MCF 10A (cell line): ENCODE measurements at regions of chr21 and their contacts with region 1.

Region 1: GRCh38 chr21:33641336-33642026 is at the start of gene CRYZL1:
- DNase-seq: peak; percentile 100
- H3K4me3 Mint-ChIP-seq: peak within 1 kb of the TSS; percentile 71
- H3K27ac Mint-ChIP-seq: peak within 1 kb of the TSS; percentile 82
- H3K4me1 Mint-ChIP-seq: peaks cover 24% of the 10 kb centered on the region
- H3K27me3 Mint-ChIP-seq: no peaks in the 10 kb centered on the region
- CTCF ChIP-seq: no peak
- total RNA-seq, gene CRYZL1: 35.2 and 40.0 TPM in 2 replicates

Region 2: GRCh38 chr21:33655591-33656221 is 14.2 kb after region 1 on chr21:
- CTCF ChIA-PET with region 1: interaction called, 3 read pairs
- POLR2A ChIA-PET with region 1: interaction called, 26 read pairs
- intact Hi-C with region 1: no loop called
- DNase-seq: peak; percentile 81
- H3K4me3 Mint-ChIP-seq: peak overlapping the region; percentile 24
- H3K27ac Mint-ChIP-seq: peak overlapping the region; percentile 82
- H3K4me1 Mint-ChIP-seq: peaks cover 28% of the 10 kb centered on the region
- H3K27me3 Mint-ChIP-seq: no peaks in the 10 kb centered on the region
- CTCF ChIP-seq: no peak

Region 3: DNA sequence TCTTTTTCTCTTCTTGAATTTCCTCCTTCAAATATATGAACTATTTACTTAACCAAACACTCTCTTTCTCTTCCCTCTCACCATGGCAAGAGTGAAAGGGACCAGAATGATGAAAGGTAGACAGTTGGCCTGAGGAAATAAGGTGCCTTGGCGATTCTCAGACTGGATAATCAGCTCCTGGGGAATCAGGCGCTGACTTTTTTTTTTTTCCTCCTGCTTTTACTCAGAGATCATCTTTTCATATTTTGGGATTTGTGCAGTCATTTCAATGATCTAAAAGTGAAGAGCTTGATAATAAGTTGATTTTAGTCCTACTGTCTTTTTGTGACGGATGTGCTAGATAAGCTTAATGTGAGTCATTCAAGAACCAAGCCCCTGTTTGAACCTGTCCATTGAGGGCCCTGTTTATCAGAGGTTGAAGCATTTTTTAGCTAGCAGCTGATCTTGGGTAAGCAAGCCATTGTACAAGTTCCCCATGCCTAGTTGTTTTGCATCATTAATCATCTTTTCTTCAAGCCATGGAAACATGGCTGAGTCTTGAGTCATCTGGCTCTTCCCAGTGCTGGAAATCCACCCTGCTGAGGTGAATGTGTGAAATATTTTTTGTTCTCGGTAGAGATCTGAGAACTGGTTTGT is 41.6 kb after region 1 on chr21:
- CTCF ChIA-PET with region 1: interaction called, 3 read pairs
- POLR2A ChIA-PET with region 1: interaction called, 42 read pairs
- intact Hi-C with region 1: loop called (anchors 2 kb)
- DNase-seq: peak; percentile 90
- H3K4me3 Mint-ChIP-seq: peak overlapping the region; percentile 55
- H3K27ac Mint-ChIP-seq: peak overlapping the region; percentile 92
- H3K4me1 Mint-ChIP-seq: peaks cover 39% of the 10 kb centered on the region
- H3K27me3 Mint-ChIP-seq: no peaks in the 10 kb centered on the region
- CTCF ChIP-seq: no peak

Region 4: GRCh38 chr21:33761441-33762036 is 120.1 kb after region 1 on chr21:
- CTCF ChIA-PET with region 1: no interaction called
- POLR2A ChIA-PET with region 1: interaction called, 3 read pairs
- intact Hi-C with region 1: loop called (anchors 5 kb)
- DNase-seq: peak; percentile 76
- H3K4me3 Mint-ChIP-seq: peak overlapping the region; percentile 3
- H3K27ac Mint-ChIP-seq: peak overlapping the region; percentile 87
- H3K4me1 Mint-ChIP-seq: peaks cover 16% of the 10 kb centered on the region
- H3K27me3 Mint-ChIP-seq: no peaks in the 10 kb centered on the region
- CTCF ChIP-seq: no peak

Region 5: DNA sequence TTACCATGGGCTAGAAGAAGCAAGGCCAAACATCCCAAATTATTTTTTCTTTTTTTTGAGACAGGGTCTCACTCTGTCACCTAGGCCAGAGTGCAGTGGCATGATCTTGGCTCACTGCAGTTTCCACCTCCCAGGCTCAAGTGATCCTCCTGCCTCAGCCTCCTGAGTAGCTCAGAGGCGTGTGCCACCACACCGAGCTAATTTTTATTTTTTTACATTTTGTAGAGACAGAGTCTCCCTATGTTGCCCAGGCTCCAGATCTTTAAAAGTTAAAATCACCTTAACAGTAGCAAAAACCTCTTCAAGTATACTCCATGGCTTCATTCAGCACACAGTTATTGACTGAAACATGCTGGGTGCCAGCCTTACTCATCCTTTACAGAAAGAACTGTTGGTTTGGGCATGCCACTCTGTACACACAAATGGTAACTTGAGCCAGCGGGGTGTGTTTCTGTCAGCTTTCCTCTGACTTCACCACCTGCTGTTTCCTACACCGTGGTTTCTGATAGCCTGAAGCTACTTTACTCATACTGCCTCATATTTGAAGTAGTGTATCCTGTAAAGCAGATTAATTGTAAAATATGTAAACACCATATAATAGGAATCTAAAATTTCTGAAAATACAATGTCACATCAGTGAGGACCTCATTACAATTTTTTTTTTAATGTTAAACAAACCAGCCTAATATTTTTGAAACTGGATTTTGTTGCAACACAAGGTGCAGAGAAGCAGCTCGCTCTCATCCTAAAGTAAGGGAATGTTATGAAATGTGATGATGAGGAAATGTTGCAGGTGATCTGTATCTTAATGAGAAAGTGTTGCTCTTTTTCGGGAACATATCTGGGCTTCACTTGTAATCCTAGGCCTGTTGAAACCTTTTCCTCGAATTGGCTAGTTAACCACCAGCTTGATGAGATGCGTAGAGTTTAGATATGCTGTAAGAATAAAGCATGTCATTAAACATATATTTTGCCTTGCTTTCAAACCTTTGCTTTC is 160.2 kb after region 1 on chr21:
- CTCF ChIA-PET with region 1: no interaction called
- POLR2A ChIA-PET with region 1: interaction called, 20 read pairs
- intact Hi-C with region 1: loop called (anchors 1 kb)
- DNase-seq: peak; percentile 97
- H3K4me3 Mint-ChIP-seq: peak overlapping the region; percentile 51
- H3K27ac Mint-ChIP-seq: peak overlapping the region; percentile 87
- H3K4me1 Mint-ChIP-seq: peaks cover 21% of the 10 kb centered on the region
- H3K27me3 Mint-ChIP-seq: no peaks in the 10 kb centered on the region
- CTCF ChIP-seq: no peak

Region 6: DNA sequence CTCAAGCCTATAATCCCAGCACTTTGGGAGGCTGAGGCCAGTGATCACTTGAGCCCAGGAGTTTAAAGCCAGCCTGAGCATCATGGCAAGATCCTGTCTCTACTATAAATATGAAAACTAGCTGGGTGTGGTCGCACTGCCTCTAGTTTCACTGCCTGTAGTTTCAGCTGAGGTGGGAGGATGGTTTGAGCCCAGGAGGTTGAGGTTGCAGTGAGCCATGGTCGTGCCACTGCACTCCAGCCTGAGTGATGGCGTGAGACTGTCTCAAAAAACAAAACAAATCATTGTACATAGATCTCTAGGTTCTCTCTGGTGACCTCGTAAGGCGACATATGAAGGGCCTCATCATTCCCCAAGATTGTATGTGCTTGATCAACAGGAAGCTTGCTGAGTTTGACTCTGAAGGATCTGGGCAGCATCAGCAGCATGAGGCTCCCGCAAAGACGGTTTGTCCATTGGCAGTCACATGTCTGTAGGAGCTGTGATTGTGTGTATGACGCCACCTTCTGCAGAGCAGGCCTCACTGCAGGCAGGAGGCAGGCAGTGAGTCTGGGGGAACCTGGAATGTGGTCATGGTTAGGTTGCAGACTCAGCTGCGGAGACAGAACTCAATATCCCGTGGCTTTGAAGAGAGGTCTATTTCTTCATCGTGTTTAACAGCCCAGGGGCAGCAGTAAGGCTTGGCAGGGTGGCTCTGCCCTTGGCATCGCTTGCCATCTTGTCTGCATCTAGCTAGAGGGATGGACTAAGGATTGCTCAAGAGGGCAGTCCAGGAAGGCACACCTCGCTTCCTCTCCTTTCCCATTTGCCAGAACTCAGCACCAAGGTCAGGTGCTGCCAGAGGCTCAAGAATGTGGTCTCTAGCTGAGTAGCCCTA is 260.2 kb after region 1 on chr21:
- CTCF ChIA-PET with region 1: interaction called, 5 read pairs
- POLR2A ChIA-PET with region 1: interaction called, 6 read pairs
- intact Hi-C with region 1: loop called (anchors 2 kb)
- DNase-seq: peak; percentile 64
- H3K4me3 Mint-ChIP-seq: no peak overlapping the region
- H3K27ac Mint-ChIP-seq: no peak overlapping the region
- H3K4me1 Mint-ChIP-seq: no peaks in the 10 kb centered on the region
- H3K27me3 Mint-ChIP-seq: no peaks in the 10 kb centered on the region
- CTCF ChIP-seq: peak; percentile 55

Region 7: GRCh38 chr21:34795175-34795547 is 1153.7 kb after region 1 on chr21:
- CTCF ChIA-PET with region 1: no interaction called
- POLR2A ChIA-PET with region 1: no interaction called
- intact Hi-C with region 1: no loop called
- DNase-seq: peak; percentile 43
- H3K4me3 Mint-ChIP-seq: peak overlapping the region; percentile 49
- H3K27ac Mint-ChIP-seq: peak overlapping the region; percentile 96
- H3K4me1 Mint-ChIP-seq: peaks cover 44% of the 10 kb centered on the region
- H3K27me3 Mint-ChIP-seq: no peaks in the 10 kb centered on the region
- CTCF ChIP-seq: no peak